BJ (cell line): ENCODE measurements at regions of chr11 and their contacts with region 1.

Region 1: DNA sequence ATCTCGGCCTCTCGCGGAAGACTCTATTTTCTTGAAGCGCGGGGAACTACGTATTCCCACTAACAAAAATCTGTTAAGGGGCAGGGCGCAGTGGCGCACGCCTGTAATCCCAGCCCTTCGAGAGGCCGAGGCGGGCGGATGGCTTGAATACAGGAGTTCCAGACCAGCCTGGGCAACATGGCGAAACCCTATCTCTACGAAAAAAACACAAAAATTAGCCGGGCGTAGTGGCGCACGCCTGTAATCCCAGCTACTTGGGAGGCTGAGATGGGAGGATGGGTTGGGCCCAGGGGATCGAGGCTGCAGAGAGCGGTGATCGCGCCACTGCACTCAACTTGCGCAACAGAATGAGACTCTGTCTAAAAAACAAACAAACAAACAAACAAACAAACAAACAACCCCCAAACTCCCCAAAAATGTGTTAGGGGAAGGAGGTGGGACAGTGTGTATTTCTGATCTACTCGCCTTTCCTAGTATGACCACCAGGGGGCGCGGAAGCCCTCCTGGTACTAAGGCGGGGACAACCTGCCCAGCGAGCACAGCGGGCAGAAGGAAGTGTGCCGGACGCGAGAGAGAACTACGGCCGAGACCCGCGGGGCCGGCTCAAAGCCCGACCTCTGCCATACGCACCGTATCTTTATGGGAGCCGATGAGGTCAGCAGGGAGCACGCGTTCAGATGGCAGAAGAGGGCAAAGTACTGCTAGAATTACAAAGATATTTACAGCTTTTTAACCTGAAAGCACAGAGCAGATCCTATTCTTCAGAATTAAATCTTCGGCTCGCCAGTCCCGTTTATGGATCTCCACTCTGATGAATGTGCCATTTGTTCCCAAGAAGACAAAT is 1.3 kb upstream of the STX3 start:
- DNase-seq: no peak
- H3K4me3 ChIP-seq: peak overlapping the region; percentile 78
- H3K27me3 ChIP-seq: no peaks in the 10 kb centered on the region
- CTCF ChIP-seq: peak; percentile 91

Region 2: GRCh38 chr11:59719556-59719955 is 34.3 kb before region 1 on chr11:
- CTCF ChIA-PET with region 1: no interaction called
- POLR2A ChIA-PET with region 1: no interaction called
- DNase-seq: no peak
- H3K4me3 ChIP-seq: no peak overlapping the region
- H3K27me3 ChIP-seq: no peaks in the 10 kb centered on the region; the same call in 1 of the 2 replicates
- CTCF ChIP-seq: no peak

Region 3: DNA sequence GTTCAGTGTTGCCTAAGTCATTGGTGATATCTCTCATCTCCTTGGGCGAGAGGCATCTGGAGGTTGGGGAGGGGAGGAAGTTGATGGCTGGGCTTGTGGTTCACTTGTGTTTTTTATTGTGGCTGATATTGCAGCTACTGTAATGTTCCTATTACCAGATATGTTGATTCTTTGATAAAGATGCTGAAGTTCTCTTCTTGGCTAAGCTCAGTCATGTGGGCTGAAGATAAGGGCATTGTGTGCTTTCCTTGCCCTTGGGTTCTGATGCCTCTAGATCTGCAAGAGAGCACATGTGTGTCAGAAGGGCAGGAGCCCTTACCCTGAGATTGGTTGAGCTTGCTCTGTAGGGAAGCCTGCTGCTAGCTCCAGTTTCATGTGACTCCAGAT is 13.3 kb after region 1 on chr11:
- CTCF ChIA-PET with region 1: interaction called, 24 read pairs
- POLR2A ChIA-PET with region 1: no interaction called
- DNase-seq: no peak
- H3K4me3 ChIP-seq: no peak overlapping the region
- H3K27me3 ChIP-seq: no peaks in the 10 kb centered on the region
- CTCF ChIP-seq: no peak

Region 4: DNA sequence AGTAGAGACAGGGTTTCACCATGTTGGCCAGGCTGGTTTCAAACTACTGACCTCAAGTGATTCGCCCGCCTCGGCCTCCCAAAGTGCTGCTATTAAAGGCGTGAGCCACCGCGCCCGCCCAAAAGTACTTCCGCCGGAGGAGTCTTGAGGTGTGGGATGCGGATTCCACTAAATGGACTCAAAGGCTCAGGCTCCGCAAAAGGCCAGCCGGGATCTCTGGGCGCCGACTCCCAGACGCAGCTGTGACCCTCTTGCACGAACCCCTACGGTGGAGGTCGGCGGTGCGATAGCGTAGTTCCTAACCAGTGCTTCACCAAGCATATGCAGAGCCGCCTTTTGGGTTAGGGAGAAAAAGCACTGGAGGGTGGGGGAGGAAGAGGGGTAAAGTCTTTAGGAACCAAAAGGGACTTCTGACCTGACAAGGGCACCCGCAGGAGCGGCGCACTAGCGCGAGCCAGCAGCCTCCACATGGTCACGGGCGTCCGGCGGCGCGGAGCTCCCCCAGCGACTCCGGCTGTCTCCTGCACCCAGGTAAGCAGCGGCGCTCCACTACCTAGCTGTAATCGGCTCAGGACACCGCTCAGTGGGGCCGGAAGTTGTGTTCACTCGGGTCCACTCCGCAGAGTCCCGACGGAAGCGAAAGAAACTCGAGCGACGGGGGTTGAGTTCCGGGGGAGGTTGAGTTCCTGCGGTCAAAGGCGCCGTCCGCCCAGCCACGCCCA is 56.5 kb after region 1 on chr11 and contains the start of gene MRPL16:
- CTCF ChIA-PET with region 1: interaction called, 181 read pairs
- POLR2A ChIA-PET with region 1: no interaction called
- DNase-seq: no peak
- H3K4me3 ChIP-seq: peak within 1 kb of the TSS; percentile 99
- H3K27me3 ChIP-seq: no peaks in the 10 kb centered on the region
- CTCF ChIP-seq: no peak
- polyA plus RNA-seq, gene MRPL16: 46.6 and 47.0 TPM in 2 replicates